ENCODE measurements at regions of chr17 and their contacts with region 1.

Region 1: GRCh38 chr17:57671667-57672632 is 73.1 kb downstream of the CCDC182 start:
- DNase-seq: peak; percentile 50
- ATAC-seq: peak; percentile 96
- H3K4me3 ChIP-seq: no peak overlapping the region
- H3K27ac ChIP-seq: no peak overlapping the region
- H3K4me1 ChIP-seq: 0 out of 2 replicates have a peak, but pooled peaks cover 5% of the 10 kb centered on the region
- H3K27me3 ChIP-seq: no peaks in the 10 kb centered on the region
- CTCF ChIP-seq: peak; percentile 98

Region 2: GRCh38 chr17:57243171-57243948 is 428.6 kb before region 1 on chr17:
- CTCF ChIA-PET with region 1: interaction called, 21 read pairs
- POLR2A ChIA-PET with region 1: no interaction called
- in situ Hi-C with region 1: no loop called
- intact Hi-C with region 1: loop called (anchors 2 kb)
- DNase-seq: peak; percentile 59
- ATAC-seq: peak; percentile 89
- H3K4me3 ChIP-seq: no peak overlapping the region
- H3K27ac ChIP-seq: no peak overlapping the region
- H3K4me1 ChIP-seq: no peaks in the 10 kb centered on the region
- H3K27me3 ChIP-seq: peaks cover 7% of the 10 kb centered on the region; the same call in 1 of the 2 replicates
- CTCF ChIP-seq: peak; percentile 100

Region 3: DNA sequence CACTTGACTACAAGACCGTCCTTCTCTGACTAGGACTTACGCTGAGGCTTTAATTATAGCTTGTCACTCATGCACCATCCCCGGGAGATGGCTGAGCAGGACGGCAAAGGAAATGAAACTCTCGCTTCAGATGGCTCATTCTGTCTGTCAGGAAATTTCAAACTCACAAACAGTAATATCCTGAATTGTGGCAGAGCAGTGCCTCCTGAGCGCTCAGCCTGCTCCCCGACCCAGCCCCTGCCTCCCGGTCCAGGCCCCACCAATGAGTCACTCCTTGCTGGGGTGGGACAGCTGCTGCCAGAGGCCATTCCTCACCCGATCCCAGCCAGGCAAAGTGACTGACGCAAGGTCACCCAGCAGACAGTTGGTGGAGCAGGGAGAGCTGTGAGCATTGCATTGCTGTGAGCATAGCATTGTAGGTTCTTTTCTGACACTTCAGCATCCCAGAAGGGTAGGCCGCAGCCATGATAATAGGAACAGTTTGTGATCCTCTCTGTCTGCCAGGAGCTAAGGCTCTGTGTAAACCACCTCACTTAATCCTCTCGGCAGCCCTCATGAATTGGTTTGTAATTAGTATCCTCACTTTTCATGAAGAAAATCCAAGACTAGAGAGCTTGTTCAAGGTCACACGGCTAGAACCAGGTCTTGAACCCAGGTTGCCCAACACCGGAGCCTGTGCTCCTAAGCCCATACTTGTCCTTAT is 52.2 kb after region 1 on chr17:
- CTCF ChIA-PET with region 1: no interaction called
- POLR2A ChIA-PET with region 1: no interaction called
- in situ Hi-C with region 1: no loop called
- intact Hi-C with region 1: no loop called
- DNase-seq: no peak
- ATAC-seq: no peak
- H3K4me3 ChIP-seq: no peak overlapping the region
- H3K27ac ChIP-seq: no peak overlapping the region
- H3K4me1 ChIP-seq: no peaks in the 10 kb centered on the region
- H3K27me3 ChIP-seq: peaks cover 8% of the 10 kb centered on the region
- CTCF ChIP-seq: no peak

Measured in Panc1 (cell line).